Activated naive CD4-positive, alpha-beta T cell treated with anti-CD3 and anti-CD28 coated beads, Interleukin-2, amount 10 ng/mL, durations not matched to agents 7 days and 5 days (primary cell): ENCODE measurements at regions of chr15 and their contacts with region 1.

Region 1: DNA sequence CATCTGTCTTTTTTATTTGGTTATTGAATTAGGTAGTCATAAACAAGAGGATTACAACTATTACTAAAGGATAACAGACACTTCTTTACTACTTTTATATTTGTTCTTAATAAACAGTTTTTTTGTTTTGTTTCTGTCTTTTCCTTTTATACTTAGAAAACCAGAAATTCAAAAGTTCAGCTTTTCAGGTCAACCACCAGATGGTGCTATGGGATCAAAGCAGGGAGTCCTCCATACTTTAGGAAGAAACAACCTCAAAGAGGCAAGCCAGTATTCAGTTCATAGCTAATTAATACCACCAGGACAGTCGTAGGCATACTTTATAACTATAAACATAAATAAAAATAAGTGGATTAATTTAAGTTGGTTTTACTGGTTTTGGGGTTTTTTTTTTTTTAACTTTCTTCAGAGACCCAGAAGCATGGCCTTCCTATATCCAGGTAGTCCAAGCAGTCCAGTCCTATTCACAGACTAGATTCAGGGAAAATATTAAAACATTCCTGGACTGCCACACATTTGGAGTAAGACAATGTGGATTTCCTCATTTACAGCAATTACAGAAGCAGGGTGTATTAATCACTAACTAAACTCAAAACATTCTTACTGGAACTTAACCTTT is 16.0 kb upstream of the EID1 start:
- DNase-seq: peak; percentile 57
- H3K4me3 Mint-ChIP-seq: no peak overlapping the region
- H3K27ac Mint-ChIP-seq: no peak overlapping the region
- H3K4me1 Mint-ChIP-seq: peaks cover 4% of the 10 kb centered on the region
- H3K27me3 Mint-ChIP-seq: peaks cover 7% of the 10 kb centered on the region

Region 2: DNA sequence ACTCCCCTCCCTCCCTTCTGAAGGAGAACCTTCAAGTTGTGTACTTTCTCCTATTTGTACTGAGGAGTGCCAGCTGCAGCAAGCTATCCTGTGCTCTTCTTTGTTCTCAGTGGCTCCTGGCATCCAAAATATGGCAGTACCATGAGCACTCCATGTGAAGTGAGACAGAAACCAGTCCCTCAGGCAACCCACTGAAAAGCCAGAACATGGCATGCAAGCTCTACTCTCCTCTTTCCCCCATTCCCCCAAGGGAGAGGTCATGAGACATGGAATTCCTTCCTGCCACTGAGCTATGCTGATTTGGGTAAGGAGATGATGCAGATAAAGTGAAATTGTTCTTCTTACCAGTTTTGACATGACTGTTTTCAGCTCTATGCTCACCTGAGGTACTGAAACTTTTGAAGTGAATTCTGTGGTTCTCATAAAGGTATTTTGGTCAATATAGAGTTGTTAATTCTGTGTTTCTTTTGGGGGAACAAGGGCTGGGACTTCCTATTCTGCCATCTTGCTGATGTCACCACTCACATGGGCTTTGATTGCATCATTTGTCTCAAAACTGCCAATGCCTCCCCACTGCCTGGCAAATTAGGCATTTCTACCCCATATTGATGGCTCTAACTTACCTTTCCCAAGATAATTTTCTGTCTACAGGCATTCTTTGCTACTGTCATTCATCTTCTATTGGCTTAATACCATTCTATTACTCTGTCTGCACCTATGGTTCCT is 28.3 kb before region 1 on chr15:
- CTCF ChIA-PET with region 1: no interaction called
- DNase-seq: no peak
- H3K4me3 Mint-ChIP-seq: no peak overlapping the region
- H3K27ac Mint-ChIP-seq: no peak overlapping the region
- H3K4me1 Mint-ChIP-seq: no peaks in the 10 kb centered on the region
- H3K27me3 Mint-ChIP-seq: peaks cover 22% of the 10 kb centered on the region

Region 3: GRCh38 chr15:48963524-48964113 is 101.7 kb after region 1 on chr15 and contains the start of gene SHC4:
- CTCF ChIA-PET with region 1: interaction called, 112 read pairs
- DNase-seq: no peak
- H3K4me3 Mint-ChIP-seq: peak within 1 kb of the TSS; percentile 62
- H3K27ac Mint-ChIP-seq: peak within 1 kb of the TSS; percentile 73
- H3K4me1 Mint-ChIP-seq: peaks cover 40% of the 10 kb centered on the region
- H3K27me3 Mint-ChIP-seq: peaks cover 58% of the 10 kb centered on the region

Region 4: DNA sequence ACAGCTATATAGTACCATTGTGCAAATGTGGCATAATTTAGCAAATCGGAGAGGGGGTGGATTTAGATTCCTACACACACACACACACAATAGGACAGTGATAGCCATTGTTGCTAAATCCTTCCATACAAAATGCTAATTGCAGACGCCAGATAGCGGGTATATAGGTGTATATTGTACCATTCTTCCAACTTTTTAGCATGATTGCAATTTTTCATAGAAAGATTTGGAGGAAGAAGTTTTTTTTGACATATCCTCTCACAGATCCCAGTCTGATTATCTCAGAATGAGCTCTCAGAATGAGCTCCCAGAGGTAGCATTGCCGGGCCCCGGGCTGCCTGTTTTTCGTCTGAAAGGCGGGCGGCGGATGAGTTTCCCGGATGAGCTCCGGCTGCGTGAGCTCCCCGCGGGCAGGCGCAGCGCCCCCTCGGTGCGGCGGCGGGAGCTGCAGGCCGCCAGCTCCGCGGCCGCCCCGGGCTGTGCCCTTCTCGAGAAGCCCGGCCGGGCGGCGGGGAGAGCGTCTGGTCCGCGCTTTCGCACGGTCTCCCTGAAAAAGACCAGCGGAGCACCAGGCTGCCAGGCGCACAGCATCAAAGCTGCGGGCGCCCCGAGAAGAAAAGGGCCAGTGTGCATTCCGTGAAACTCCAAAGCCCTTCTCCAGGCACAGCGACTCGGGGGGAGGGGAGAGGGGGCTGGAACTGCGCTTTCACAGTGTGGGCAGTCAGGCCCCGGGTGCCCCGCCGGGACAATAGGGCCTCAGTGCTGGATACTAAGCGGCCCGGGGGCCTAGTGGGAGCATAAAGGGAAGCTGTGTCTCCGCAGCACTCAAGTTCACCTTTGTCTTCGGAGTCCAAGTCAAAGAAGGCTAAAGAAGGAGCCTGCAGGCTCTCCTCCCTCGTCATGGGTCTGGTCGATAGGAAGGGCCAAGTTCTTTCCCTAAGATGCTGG is 113.8 kb after region 1 on chr15:
- CTCF ChIA-PET with region 1: interaction called, 45 read pairs
- DNase-seq: peak; percentile 76
- H3K4me3 Mint-ChIP-seq: peak overlapping the region; percentile 52
- H3K27ac Mint-ChIP-seq: no peak overlapping the region
- H3K4me1 Mint-ChIP-seq: peaks cover 8% of the 10 kb centered on the region
- H3K27me3 Mint-ChIP-seq: peaks cover 46% of the 10 kb centered on the region

Region 5: DNA sequence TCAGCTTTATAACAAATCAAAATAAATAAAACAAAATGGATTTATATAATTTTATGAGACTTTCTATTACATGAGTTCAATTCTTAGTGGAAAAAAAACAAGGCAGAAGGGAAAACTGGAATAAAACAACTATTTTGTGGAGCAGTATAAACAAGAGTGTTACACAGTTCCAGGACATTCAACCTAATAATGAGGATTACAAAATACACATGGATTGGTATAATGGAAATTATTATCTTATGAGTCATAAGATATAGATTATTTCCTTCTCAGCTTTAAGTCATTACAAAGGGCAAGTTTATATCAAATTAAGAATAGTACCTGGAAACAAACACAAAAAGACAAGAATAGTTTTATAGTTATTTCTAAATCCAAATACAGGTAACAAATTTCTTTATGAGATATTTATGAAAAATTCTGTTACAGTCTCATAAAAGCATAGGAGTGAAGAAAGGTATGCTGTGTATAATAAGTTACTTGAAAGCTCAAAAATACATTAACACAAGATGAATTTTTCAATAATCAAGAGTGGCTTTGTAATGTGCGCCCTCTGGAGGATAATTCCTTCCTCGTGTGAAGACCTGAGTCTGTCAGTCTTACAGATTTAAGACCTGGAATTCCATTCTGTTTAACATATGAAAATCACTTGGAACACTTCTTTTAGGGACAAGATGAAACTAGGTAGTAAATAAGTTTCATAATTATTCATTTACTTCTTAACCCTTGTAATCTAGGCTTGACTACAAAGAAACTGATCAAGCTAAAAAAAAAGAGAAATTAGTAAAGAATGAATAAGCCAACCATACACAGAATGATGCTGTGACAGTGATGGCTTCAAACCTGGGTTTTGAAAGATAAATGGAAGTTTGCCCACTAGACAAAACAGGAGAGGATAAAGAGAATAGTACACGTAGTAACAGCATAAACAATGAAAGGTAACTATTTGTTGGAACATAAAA is 284.0 kb after region 1 on chr15:
- CTCF ChIA-PET with region 1: interaction called, 51 read pairs
- DNase-seq: peak; percentile 54
- H3K4me3 Mint-ChIP-seq: no peak overlapping the region
- H3K27ac Mint-ChIP-seq: no peak overlapping the region
- H3K4me1 Mint-ChIP-seq: peaks cover 26% of the 10 kb centered on the region
- H3K27me3 Mint-ChIP-seq: no peaks in the 10 kb centered on the region

Region 6: GRCh38 chr15:49187549-49188245 is 325.8 kb after region 1 on chr15:
- CTCF ChIA-PET with region 1: no interaction called
- DNase-seq: no peak
- H3K4me3 Mint-ChIP-seq: no peak overlapping the region
- H3K27ac Mint-ChIP-seq: no peak overlapping the region
- H3K4me1 Mint-ChIP-seq: peaks cover 18% of the 10 kb centered on the region
- H3K27me3 Mint-ChIP-seq: no peaks in the 10 kb centered on the region

Region 7: DNA sequence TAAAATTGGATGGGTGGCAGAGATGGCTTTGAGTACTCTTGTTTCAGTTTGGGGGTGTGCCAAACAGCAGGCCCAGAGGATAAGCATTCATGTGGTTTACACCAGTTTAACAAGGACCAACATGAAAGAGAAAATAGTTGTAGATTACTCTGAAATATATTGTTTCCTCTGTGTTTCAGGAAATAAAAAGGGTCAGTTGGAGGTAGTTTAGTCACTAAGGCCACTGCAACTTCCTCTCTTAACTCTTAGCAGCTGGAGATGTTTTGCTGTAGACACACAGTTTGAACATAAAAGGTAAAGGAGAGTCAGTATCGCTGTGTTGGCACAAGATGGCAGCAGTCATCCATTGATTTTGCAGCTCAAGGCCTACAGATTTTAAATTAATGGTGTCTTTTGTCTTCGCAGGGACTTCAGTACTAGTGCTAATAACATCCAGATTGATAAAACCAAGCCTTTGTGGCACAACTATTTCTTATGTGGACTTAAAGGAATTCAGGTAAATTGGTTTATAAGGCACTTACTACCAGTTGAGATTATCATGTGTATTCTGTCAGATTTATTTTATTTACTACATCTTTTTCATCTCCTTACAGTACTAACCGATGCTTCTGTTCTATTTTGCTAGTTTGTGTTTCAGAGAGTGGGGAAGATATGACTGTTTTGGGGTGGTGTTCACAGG is 373.7 kb after region 1 on chr15:
- CTCF ChIA-PET with region 1: interaction called, 10 read pairs
- DNase-seq: peak; percentile 69
- H3K4me3 Mint-ChIP-seq: no peak overlapping the region
- H3K27ac Mint-ChIP-seq: peak overlapping the region; percentile 28
- H3K4me1 Mint-ChIP-seq: peaks cover 16% of the 10 kb centered on the region
- H3K27me3 Mint-ChIP-seq: no peaks in the 10 kb centered on the region

Region 8: DNA sequence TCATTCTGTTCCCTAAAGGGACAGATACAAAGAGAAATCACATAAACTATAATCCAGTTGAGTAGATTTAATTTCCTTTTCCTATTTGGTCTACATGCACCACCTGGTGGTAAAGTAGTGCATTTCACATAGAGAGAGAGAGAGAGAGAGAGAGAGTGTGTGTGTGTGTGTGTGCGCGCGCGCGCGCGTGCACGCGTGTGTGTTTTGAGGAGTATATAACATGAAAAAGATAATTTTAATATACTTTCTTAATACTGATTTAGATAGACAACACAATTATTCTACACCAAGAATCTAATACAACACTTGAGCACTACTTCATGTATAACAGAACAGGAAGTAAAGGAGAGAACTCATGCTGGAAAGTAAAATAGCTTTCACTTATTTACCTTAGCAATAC is 560.1 kb after region 1 on chr15:
- CTCF ChIA-PET with region 1: interaction called, 24 read pairs
- DNase-seq: peak; percentile 37
- H3K4me3 Mint-ChIP-seq: peak overlapping the region; percentile 3
- H3K27ac Mint-ChIP-seq: peak overlapping the region; percentile 19
- H3K4me1 Mint-ChIP-seq: no peaks in the 10 kb centered on the region
- H3K27me3 Mint-ChIP-seq: peaks cover 4% of the 10 kb centered on the region